ENCODE measurements at regions of chr1 and their contacts with region 1.

Region 1: GRCh38 chr1:8540261-8540941 is 222.5 kb downstream of the SLC45A1 start:
- DNase-seq: no peak
- H3K4me3 Mint-ChIP-seq: peak overlapping the region; percentile 65
- H3K27ac Mint-ChIP-seq: peak overlapping the region; percentile 91
- H3K4me1 Mint-ChIP-seq: peaks cover 51% of the 10 kb centered on the region
- H3K27me3 Mint-ChIP-seq: no peaks in the 10 kb centered on the region

Region 2: GRCh38 chr1:8396786-8397406 is 143.5 kb before region 1 on chr1:
- intact Hi-C with region 1: loop called (anchors 5 kb)
- DNase-seq: no peak
- H3K4me3 Mint-ChIP-seq: no peak overlapping the region
- H3K27ac Mint-ChIP-seq: peak overlapping the region; percentile 71
- H3K4me1 Mint-ChIP-seq: peaks cover 63% of the 10 kb centered on the region
- H3K27me3 Mint-ChIP-seq: no peaks in the 10 kb centered on the region

Region 3: DNA sequence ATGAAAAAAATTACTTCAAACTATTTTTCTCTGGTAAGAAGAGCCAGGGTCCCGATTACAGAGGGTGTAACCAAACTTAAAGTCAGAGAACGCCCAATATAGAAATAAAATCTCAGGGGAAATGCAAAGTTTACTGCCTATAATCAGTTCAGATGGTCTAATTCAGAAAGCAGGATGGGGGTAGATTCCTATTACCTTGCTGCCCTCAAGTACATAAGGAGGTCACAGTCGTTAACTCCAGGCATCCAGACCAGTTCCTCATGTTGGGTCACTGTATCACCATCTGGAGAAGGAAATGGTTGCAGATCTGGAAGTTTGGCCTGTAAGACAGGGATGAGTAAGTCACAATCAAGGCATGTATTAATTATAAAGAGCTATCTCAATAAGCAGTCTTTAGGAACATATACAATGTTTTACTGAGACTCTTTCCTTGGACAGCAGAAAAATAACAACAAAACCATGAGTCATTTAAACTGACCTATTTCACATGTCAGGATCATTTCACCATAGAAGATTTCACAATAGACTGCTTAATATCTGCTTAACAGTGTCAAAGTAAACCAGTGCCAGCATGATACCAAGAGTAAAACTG is 43.1 kb before region 1 on chr1:
- intact Hi-C with region 1: loop called (anchors 1 kb)
- DNase-seq: no peak
- H3K4me3 Mint-ChIP-seq: no peak overlapping the region
- H3K27ac Mint-ChIP-seq: peak overlapping the region; percentile 67
- H3K4me1 Mint-ChIP-seq: peaks cover 34% of the 10 kb centered on the region
- H3K27me3 Mint-ChIP-seq: no peaks in the 10 kb centered on the region

Region 4: DNA sequence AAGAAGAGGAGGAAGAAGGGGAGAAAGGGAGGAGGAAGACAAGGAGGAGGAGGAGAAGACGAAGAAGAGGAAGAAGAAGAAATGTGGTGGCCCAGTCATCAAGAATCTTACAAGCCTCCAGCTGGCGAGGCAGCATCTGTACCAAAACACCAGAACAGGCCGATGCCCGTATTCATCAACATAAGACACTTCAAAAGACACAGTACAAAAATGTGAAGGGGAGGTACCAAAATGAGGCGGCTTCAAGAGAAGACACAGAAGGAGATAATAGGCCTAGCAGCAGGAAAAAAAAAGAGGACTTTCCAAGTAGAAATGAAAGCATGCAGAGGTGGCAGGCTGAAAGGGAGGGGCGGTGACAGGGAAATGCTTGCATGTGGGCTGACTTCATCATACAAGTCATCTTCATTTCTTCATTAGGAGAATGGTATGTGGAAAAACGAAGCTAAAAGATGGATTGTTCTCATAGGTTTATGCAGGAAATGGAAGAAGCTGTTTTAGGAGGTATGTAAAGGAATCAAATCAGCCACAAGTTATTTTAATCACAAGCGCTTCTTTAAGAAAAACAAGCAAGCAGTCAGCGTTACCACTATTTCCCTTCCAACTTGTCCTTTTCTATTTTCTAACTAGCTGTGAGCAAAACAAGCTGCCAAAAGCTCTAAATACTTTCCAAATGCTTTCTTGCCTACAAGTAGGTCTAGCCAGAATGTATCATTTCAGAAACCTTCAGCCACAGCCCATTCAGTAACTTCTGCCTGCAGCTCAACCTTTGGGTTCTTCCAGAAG is 30.2 kb before region 1 on chr1:
- intact Hi-C with region 1: loop called (anchors 1 kb)
- DNase-seq: peak; percentile 47
- H3K4me3 Mint-ChIP-seq: peak overlapping the region; percentile 54
- H3K27ac Mint-ChIP-seq: peak overlapping the region; percentile 88
- H3K4me1 Mint-ChIP-seq: peaks cover 47% of the 10 kb centered on the region
- H3K27me3 Mint-ChIP-seq: no peaks in the 10 kb centered on the region

Region 5: GRCh38 chr1:8554956-8555534 is 14.6 kb after region 1 on chr1:
- intact Hi-C with region 1: loop called (anchors 1 kb)
- DNase-seq: no peak
- H3K4me3 Mint-ChIP-seq: peak overlapping the region; percentile 17
- H3K27ac Mint-ChIP-seq: peak overlapping the region; percentile 84
- H3K4me1 Mint-ChIP-seq: peaks cover 55% of the 10 kb centered on the region
- H3K27me3 Mint-ChIP-seq: no peaks in the 10 kb centered on the region

Region 6: GRCh38 chr1:8604041-8604945 is 63.9 kb after region 1 on chr1:
- intact Hi-C with region 1: loop called (anchors 1 kb)
- DNase-seq: peak; percentile 34
- H3K4me3 Mint-ChIP-seq: peak overlapping the region; percentile 61
- H3K27ac Mint-ChIP-seq: peak overlapping the region; percentile 94
- H3K4me1 Mint-ChIP-seq: peaks cover 48% of the 10 kb centered on the region
- H3K27me3 Mint-ChIP-seq: no peaks in the 10 kb centered on the region

Region 7: DNA sequence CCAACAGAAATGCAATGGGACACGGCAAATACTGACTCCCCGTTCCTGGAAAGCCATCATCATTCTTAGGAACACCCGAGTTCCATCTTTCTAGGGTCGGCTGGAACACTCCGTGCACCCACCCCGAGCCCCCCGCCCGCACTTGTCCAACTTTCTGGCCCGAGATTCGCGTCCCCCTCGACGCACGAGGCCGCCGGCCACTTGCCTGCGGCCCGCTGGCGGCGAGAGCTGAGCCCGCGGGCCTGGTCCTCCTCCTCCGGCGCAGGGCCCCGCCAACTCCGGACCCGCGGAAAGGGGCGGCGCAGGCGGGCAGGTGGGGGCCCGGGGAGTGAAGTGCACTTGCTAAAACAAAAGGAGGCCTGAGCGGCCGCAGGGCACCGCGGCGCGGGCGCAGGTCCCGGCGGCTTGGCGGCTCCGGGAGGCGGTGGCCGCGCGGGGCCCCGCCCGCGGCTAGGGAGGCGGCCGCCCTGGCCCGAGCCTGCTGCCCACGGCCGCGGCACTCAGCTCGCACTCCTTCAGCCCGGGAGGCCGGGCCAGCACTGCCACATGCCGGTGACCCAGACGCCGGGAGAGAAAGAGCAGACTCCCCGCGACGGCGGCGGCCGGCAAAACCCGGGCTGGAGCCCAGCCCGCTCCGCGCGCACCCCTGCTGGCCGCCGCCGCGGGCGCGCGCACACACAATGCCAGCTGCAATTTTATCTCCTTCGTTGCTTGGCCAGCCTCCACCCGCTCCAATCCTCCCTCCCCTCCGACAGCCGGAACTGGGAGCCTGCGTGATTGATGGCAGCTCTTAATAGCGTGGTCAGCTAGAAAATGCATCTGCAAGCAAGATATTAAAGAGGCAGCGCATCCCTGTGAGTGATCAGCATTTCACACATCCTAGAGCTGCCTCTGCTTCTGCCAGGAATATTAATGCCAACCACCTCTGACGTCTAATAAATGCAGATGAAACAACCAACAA is 162.7 kb after region 1 on chr1:
- intact Hi-C with region 1: no loop called
- DNase-seq: peak; percentile 69
- H3K4me3 Mint-ChIP-seq: peak overlapping the region; percentile 97
- H3K27ac Mint-ChIP-seq: peak overlapping the region; percentile 89
- H3K4me1 Mint-ChIP-seq: peaks cover 58% of the 10 kb centered on the region
- H3K27me3 Mint-ChIP-seq: peaks cover 3% of the 10 kb centered on the region

Measured in activated T-helper 1 cell treated with anti-CD3 and anti-CD28 coated beads, Interleukin-12 subunit alpha, Interleukin-12 subunit beta, Interleukin-2, Interleukin-4 antibody, amounts not matched to agents 30 ng/mL and 10 ng/mL and 1 ng/mL, durations not matched to agents 14 hours and 24 hours and 36 hours (primary cell).